ENCODE measurements at regions of chrX and their contacts with region 1.

Region 1: DNA sequence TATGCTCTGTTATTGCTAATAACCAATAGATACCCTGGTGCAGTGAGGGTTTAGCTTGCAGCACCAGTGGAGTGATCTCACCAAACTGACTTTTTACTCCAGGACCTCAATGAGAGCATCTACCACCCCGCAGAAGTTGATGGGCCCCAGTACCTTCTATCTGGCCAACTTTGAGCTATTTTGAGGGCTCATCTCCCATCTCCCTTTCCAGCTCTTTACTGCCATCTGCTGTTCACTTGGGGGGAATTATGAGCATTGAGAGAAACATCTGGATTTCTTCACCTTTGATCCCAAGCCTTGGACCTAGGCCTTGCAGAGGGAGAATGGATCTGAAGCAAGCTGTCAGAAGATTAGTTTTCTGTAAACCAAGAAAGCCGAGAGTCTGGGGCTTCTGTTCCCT is 143.6 kb downstream of the TMEM164 start:
- DNase-seq: no peak
- ATAC-seq: peak; percentile 60 to 68
- H3K4me3 ChIP-seq: no peak overlapping the region
- H3K27ac ChIP-seq: peak overlapping the region; percentile 40 to 77 (median 74)
- H3K4me1 ChIP-seq: peaks cover 25 to 36% of the 10 kb centered on the region in 2 donors
- H3K27me3 ChIP-seq: no peaks in the 10 kb centered on the region
- CTCF ChIP-seq: peak in 4 of 5 experiments; percentile 60 to 68 (median 66)
- POLR2A ChIP-seq: no peak

Region 2: DNA sequence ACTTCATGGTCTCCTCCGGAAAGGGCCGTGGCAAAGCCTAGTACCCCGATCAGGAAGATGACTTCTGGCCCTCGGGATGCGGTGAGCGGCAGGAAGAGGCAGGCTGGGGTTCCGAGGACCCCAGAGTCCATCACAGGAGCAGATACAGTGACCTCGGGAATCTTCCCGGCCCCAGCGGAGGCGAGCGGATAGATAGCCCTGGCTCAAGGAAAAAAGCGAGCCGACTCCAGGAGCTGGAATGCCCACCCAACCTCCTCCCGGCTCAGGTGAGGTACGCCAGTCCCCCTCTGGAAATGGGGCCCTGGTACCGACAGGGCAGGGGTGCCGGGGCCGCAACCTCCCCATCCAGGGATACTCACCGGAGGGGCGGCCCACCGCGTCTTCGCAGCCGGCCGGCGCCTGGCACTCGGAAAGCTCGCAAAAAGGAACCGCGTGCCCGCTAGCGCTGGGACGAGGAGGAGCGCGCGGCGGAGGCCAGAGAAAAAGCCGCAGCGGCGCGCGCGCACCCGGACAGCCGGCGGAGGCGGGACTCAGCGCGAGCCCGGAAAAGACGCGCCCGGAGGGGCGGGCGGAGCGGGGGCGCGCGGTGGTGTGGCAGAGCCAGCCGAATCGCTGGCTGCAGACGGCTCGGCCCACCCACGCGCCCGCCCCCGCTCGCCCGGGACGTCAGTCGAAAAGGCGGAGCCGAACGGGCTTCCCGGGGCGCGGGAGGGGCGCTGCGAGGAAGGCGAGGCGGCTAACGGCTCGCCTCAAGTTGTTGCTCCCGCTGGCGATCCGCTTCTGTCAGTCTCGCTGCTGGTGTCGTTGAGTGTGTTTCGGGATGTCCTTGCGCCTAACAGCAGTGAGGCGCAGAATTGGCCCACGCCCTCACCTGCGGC is 413.5 kb before region 1 on chrX and contains the start of gene ACSL4:
- in situ Hi-C with region 1: no loop called
- intact Hi-C with region 1: loop called (anchors 10 kb)
- DNase-seq: peak; percentile 65 to 80
- ATAC-seq: peak; percentile 74 to 85
- H3K4me3 ChIP-seq: peak within 1 kb of the TSS; percentile 62 to 85 (median 80)
- H3K27ac ChIP-seq: peak within 1 kb of the TSS; percentile 82 to 91 (median 86)
- H3K4me1 ChIP-seq: peaks cover 0 to 5% of the 10 kb centered on the region in 2 donors
- H3K27me3 ChIP-seq: no peaks in the 10 kb centered on the region
- CTCF ChIP-seq: no peak
- POLR2A ChIP-seq: peak; percentile 70 to 86
- total RNA-seq, gene ACSL4: 18.7 to 259 (median 132) TPM

Region 3: DNA sequence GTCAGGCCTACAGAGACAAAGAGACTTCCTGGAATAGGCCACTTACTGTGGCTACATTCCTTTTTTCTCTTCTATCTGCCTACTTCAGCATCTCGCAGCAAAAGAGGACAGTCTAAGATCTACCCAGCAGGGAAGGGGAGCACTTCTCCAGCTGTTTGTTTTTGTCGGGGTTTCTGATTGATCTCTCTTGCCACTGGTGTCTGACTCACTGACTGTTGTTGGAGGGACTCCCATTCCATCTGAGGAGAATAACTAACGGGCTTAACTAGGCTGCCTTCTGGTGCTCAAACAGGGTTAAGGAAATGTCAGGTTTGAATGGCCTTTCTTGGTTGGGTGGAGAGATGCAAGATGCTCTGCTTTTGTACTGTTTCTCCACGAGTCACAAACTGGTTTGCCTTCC is 243.9 kb before region 1 on chrX:
- in situ Hi-C with region 1: loop called in 2 of 4 experiments (anchors 10 to 25 kb)
- intact Hi-C with region 1: no loop called
- DNase-seq: no peak
- ATAC-seq: no peak
- H3K4me3 ChIP-seq: no peak overlapping the region
- H3K27ac ChIP-seq: no peak overlapping the region
- H3K4me1 ChIP-seq: no peaks in the 10 kb centered on the region
- H3K27me3 ChIP-seq: no peaks in the 10 kb centered on the region
- CTCF ChIP-seq: no peak
- POLR2A ChIP-seq: no peak

Region 4: DNA sequence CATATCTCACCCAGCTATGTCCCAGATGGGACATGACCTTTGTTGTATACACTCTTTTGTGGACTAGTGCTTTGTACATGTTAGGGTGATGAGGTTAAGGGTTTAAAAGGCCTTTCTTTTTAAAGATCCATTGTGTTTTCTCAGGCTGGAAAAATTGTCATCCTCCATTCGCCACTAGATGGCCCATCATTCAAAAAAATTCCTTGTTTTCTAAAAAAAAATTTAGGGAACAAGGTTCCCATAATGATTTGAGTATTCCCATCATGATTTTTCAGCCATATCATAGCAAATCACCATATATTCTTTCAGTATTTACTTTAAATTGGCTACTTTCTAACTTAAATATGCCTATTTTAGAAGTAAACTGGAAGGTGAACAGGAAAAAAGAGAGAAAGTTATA is 235.5 kb before region 1 on chrX:
- in situ Hi-C with region 1: loop called (anchors 5 to 25 kb)
- intact Hi-C with region 1: loop called (anchors 2 kb)
- DNase-seq: no peak
- ATAC-seq: no peak
- H3K4me3 ChIP-seq: no peak overlapping the region
- H3K27ac ChIP-seq: no peak overlapping the region
- H3K4me1 ChIP-seq: no peaks in the 10 kb centered on the region
- H3K27me3 ChIP-seq: no peaks in the 10 kb centered on the region
- CTCF ChIP-seq: peak; percentile 27 to 54 (median 30)
- POLR2A ChIP-seq: no peak

Region 5: GRCh38 chrX:109927663-109928273 is 218.8 kb before region 1 on chrX:
- in situ Hi-C with region 1: loop called in 1 of 4 experiments (anchors 25 kb)
- intact Hi-C with region 1: loop called (anchors 5 kb)
- DNase-seq: peak; percentile 48 to 64
- ATAC-seq: peak; percentile 94
- H3K4me3 ChIP-seq: no peak overlapping the region
- H3K27ac ChIP-seq: peak overlapping the region; percentile 88 to 91 (median 90)
- H3K4me1 ChIP-seq: peaks cover 21 to 31% of the 10 kb centered on the region in 2 donors
- H3K27me3 ChIP-seq: no peaks in the 10 kb centered on the region
- CTCF ChIP-seq: no peak
- POLR2A ChIP-seq: peak in 1 of 2 donors; percentile 16

Region 6: DNA sequence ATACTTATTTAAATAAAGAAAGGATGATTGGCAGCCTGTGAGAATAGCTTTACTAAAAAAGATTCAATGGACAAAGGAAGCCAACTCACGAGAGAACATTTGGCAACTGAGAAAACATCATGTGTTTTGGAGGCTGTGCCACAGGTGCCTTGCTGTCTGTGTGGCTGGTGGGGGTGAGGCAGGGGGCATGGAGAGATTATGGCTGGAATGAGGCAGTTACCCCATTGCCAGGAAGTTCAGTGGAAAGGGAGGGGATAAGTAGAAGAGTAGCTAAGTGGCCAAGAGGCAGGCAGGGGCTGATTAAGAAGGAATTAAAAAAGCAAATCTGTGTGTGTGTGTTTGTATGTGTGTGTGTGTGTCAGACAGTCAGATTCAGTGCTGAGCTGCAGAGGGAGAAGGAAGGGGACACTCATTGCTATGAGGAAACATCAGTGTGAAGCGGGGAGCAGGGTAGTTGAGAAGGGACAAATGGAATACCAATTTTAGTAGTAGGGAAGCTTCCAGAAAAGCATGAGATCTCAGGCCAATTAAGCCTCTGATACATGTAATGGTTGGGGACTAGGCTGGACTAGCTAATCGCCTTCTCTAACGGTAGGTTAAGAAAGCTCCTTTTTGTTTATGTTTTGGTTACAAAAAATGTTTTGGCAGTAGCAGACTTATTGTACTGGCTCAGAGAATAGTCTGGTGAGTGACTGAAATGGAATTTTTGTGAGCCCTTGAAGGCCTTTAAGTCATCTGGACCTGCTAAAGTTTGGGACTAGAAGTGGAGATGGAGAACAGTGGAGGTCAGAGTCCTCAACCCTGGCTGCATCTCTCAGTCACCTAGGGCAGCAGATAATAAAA is 125.1 kb before region 1 on chrX:
- in situ Hi-C with region 1: no loop called
- intact Hi-C with region 1: loop called (anchors 5 kb)
- DNase-seq: peak; percentile 11 to 53
- ATAC-seq: peak; percentile 71 to 79
- H3K4me3 ChIP-seq: no peak overlapping the region
- H3K27ac ChIP-seq: peak overlapping the region; percentile 74 to 84 (median 79)
- H3K4me1 ChIP-seq: peaks cover 33 to 35% of the 10 kb centered on the region in 2 donors
- H3K27me3 ChIP-seq: peaks cover 0 to 3% (median 0%) of the 10 kb centered on the region in 3 donors
- CTCF ChIP-seq: no peak
- POLR2A ChIP-seq: no peak

Region 7: GRCh38 chrX:110310000-110310790 is 163.7 kb after region 1 on chrX:
- in situ Hi-C with region 1: no loop called
- intact Hi-C with region 1: no loop called
- DNase-seq: no peak
- ATAC-seq: peak in 1 of 2 donors; percentile 65
- H3K4me3 ChIP-seq: no peak overlapping the region
- H3K27ac ChIP-seq: no peak overlapping the region
- H3K4me1 ChIP-seq: peaks cover 0 to 12% of the 10 kb centered on the region in 2 donors
- H3K27me3 ChIP-seq: no peaks in the 10 kb centered on the region
- CTCF ChIP-seq: no peak
- POLR2A ChIP-seq: no peak